ENCODE measurements at regions of chr2 and their contacts with region 1.

Region 1: GRCh38 chr2:100291120-100291970 is 31.0 kb downstream of the LONRF2 start:
- DNase-seq: peak; percentile 97
- ATAC-seq: peak; percentile 84
- H3K4me3 ChIP-seq: peak overlapping the region in 1 of 2 experiments; percentile 37; a peak in 2 of 4 replicates
- H3K27ac ChIP-seq: peak overlapping the region; percentile 96
- H3K4me1 ChIP-seq: peaks cover 51 to 67% of the 10 kb centered on the region in 2 experiments
- H3K27me3 ChIP-seq: no peaks in the 10 kb centered on the region
- CTCF ChIP-seq: no peak
- POLR2A ChIP-seq: peak; percentile 30
- RAD21 ChIP-seq: 0 out of 2 replicates have a peak, but pooled peaks have one; percentile 8

Region 2: DNA sequence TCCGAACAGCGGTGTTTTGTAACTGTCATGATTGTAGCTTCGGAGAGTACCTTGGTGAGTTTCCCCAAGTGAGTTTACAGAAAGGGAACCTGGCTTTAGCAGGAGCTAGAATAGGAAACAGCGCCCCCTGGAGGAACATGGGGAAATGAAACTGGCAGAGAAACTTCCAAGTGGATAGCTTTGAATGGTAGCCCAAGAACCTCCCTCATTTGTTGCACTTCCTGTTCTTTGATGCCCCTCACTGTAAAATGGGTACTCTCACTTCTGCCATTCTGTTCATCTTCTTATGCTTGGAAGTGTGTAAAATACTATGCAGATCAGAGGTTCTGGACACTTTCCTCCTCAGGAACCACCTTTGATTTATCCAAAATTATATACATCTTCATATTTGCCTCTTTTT is 89.9 kb after region 1 on chr2:
- CTCF ChIA-PET with region 1: interaction called, 24 read pairs
- POLR2A ChIA-PET with region 1: interaction called, 11 read pairs
- RAD21 ChIA-PET with region 1: interaction called, 6 to 14 read pairs
- intact Hi-C with region 1: no loop called
- DNase-seq: peak; percentile 71
- ATAC-seq: peak; percentile 89
- H3K4me3 ChIP-seq: no peak overlapping the region
- H3K27ac ChIP-seq: no peak overlapping the region
- H3K4me1 ChIP-seq: peaks cover 0 to 7% of the 10 kb centered on the region in 2 experiments; a peak in 2 of 4 replicates
- H3K27me3 ChIP-seq: no peaks in the 10 kb centered on the region
- CTCF ChIP-seq: peak; percentile 86 to 93 (median 87); a peak in 5 of 6 replicates
- POLR2A ChIP-seq: no peak
- RAD21 ChIP-seq: peak; percentile 95

Region 3: GRCh38 chr2:100562732-100563720 is 271.7 kb after region 1 on chr2 and contains the start of gene PDCL3:
- CTCF ChIA-PET with region 1: no interaction called
- POLR2A ChIA-PET with region 1: no interaction called
- RAD21 ChIA-PET with region 1: no interaction called
- intact Hi-C with region 1: loop called (anchors 10 kb)
- DNase-seq: peak; percentile 97
- ATAC-seq: peak; percentile 91
- H3K4me3 ChIP-seq: peak within 1 kb of the TSS; percentile 82 to 86
- H3K27ac ChIP-seq: peak within 1 kb of the TSS; percentile 76
- H3K4me1 ChIP-seq: peaks cover 11 to 17% of the 10 kb centered on the region in 2 experiments; a peak in 3 of 4 replicates
- H3K27me3 ChIP-seq: no peaks in the 10 kb centered on the region
- CTCF ChIP-seq: peak in 1 of 3 experiments; percentile 27; a peak in 1 of 6 replicates
- POLR2A ChIP-seq: no peak
- RAD21 ChIP-seq: no peak
- total RNA-seq, gene PDCL3: 26.3 TPM

Measured in HCT116 (cell line).